ENCODE measurements at regions of chr14 and their contacts with region 1.

Region 1: DNA sequence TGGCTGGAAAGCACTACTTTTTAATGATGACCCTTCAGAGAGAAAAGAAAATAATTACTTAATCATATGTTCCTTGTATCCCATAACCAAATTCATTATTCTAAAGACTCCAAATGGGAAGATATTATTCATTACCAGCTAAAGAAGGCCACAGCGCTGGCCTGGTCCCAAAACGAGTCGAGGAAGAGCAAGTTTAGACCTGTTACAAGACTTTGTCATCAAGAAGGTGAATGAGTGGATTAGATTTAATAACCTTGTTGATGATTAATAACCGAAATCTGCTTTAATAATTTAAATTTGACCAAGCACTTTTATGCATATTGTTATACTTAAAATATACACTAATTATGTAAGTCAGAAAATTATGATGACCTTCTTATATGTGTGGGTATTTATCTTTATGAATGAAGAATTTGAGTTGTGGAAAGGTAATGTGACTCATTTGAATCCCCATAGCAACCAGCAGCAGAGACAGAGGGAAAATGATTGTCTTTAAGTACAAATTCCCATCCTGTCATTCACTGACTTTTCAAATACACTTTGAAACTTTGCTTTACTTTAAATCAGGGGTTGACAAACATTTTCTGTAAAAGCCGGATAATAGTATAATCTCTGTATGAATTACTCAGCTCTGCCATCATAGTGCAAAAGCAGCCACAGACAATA is 200.3 kb upstream of the NPAS3 start:
- DNase-seq: no peak
- ATAC-seq: no peak
- H3K4me3 ChIP-seq: no peak overlapping the region
- H3K27ac ChIP-seq: no peak overlapping the region
- H3K4me1 ChIP-seq: no peaks in the 10 kb centered on the region
- H3K27me3 ChIP-seq: no peaks in the 10 kb centered on the region
- CTCF ChIP-seq: no peak

Region 2: GRCh38 chr14:32722631-32723183 is 15.6 kb before region 1 on chr14:
- CTCF ChIA-PET with region 1: no interaction called
- POLR2A ChIA-PET with region 1: no interaction called
- in situ Hi-C with region 1: no loop called
- intact Hi-C with region 1: loop called (anchors 1 kb)
- DNase-seq: no peak
- ATAC-seq: no peak
- H3K4me3 ChIP-seq: no peak overlapping the region
- H3K27ac ChIP-seq: no peak overlapping the region
- H3K4me1 ChIP-seq: no peaks in the 10 kb centered on the region
- H3K27me3 ChIP-seq: no peaks in the 10 kb centered on the region
- CTCF ChIP-seq: no peak